Activated naive CD4-positive, alpha-beta T cell treated with anti-CD3 and anti-CD28 coated beads for 36 hours (primary cell): ENCODE measurements at regions of chr5 and their contacts with region 1.

Region 1: DNA sequence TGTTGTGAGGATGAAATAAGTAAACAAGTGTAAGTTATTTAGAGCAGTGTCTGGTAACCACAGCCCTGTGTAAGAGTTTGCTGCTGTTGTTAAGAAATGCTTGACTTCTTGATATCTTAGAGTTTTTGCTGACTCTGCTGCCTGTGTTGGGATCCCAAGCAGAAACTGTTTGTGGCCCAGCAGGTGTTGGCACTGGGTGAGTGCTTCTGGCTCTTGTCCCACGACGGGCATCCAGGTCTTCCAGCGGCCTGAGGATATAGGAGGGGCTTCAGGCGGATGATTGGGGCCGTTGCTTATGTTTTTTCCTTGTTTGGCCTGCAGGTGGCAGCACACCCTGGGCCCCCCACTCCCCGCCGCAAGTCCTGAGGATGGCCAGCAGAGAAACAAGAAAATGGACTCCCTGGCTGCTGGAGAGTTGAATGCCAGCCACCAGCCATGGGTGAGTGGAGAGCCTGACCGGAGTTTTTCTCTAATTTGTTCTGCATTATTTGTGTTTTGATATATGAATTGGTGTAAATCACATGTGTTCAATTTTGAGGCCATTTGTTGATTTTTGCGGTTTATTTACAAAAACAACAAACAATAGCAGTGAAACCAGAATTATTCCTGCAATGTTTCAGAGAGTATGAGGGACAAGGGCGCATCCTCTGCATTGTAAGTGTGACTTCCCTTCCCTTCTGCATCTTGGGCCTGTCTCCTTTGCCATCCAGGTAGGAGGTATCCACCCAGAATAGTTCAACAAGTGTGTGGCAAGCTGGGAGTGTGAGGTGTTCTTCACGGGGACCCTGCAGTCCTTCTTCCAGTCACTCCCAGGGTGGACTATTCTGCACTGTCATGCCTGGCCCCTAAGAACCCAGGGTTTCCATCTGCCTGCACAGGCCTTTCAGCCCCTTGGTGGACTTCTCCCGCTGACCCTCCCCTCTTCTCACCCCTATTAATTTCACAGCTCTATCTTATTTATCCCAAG is 50.3 kb downstream of the SLC22A5 start:
- DNase-seq: peak; percentile 67
- H3K4me3 Mint-ChIP-seq: peak overlapping the region; percentile 14
- H3K27ac Mint-ChIP-seq: peak overlapping the region; percentile 86
- H3K4me1 Mint-ChIP-seq: peaks cover 87% of the 10 kb centered on the region
- H3K27me3 Mint-ChIP-seq: no peaks in the 10 kb centered on the region

Region 2: DNA sequence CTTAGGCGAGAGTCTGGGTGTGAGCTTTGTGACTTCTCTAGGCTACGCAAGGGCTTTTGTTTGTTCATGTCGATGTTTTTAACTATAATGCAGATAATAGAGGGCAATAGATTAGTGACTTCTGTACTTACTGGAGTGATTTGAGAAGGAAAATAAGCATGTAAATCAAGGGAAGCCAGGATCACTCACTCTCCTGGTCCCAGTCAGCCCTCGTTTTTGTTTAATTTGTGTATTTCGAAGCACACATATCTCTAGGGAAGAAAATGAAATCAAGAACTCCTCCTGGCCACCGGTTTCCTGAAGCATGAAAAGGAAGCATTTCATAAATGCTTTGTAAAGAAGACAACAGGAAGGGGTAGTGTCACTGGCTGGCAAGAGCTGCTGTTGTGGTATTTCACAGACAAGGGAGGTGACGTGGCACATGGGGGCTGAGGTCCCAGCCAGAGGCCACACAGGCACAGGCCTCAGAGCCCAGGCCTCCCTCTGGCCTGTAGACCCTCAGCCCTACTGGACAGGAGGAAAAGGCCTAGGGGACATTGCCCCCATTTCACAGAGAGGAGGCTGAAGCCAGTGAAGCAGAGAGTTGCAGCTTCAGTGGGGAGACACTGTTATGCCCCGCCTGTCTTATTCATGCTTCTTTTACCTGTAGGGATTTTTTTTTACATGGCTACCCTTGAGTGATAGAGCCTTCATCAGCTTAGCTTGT is 36.7 kb after region 1 on chr5:
- CTCF ChIA-PET with region 1: interaction called, 16 read pairs
- intact Hi-C with region 1: loop called (anchors 1 kb)
- DNase-seq: peak; percentile 66
- H3K4me3 Mint-ChIP-seq: peak overlapping the region; percentile 0
- H3K27ac Mint-ChIP-seq: peak overlapping the region; percentile 83
- H3K4me1 Mint-ChIP-seq: peaks cover 84% of the 10 kb centered on the region
- H3K27me3 Mint-ChIP-seq: no peaks in the 10 kb centered on the region

Region 3: GRCh38 chr5:132473019-132473531 is 53.3 kb after region 1 on chr5:
- CTCF ChIA-PET with region 1: interaction called, 19 read pairs
- intact Hi-C with region 1: no loop called
- DNase-seq: peak; percentile 86
- H3K4me3 Mint-ChIP-seq: peak overlapping the region; percentile 16
- H3K27ac Mint-ChIP-seq: peak overlapping the region; percentile 80
- H3K4me1 Mint-ChIP-seq: peaks cover 67% of the 10 kb centered on the region
- H3K27me3 Mint-ChIP-seq: no peaks in the 10 kb centered on the region

Region 4: GRCh38 chr5:132479111-132479951 is 59.5 kb after region 1 on chr5:
- CTCF ChIA-PET with region 1: interaction called, 19 read pairs
- intact Hi-C with region 1: no loop called
- DNase-seq: no peak
- H3K4me3 Mint-ChIP-seq: no peak overlapping the region
- H3K27ac Mint-ChIP-seq: peak overlapping the region; percentile 36
- H3K4me1 Mint-ChIP-seq: peaks cover 53% of the 10 kb centered on the region
- H3K27me3 Mint-ChIP-seq: no peaks in the 10 kb centered on the region

Region 5: GRCh38 chr5:132490486-132491367 is 70.9 kb after region 1 on chr5 and contains the start of gene IRF1:
- CTCF ChIA-PET with region 1: interaction called, 76 read pairs
- intact Hi-C with region 1: loop called (anchors 1 kb)
- DNase-seq: peak; percentile 98
- H3K4me3 Mint-ChIP-seq: peak within 1 kb of the TSS; percentile 91
- H3K27ac Mint-ChIP-seq: peak within 1 kb of the TSS; percentile 97
- H3K4me1 Mint-ChIP-seq: peaks cover 64% of the 10 kb centered on the region
- H3K27me3 Mint-ChIP-seq: no peaks in the 10 kb centered on the region
- total RNA-seq, gene IRF1: 84.3 to 88.4 TPM

Region 6: DNA sequence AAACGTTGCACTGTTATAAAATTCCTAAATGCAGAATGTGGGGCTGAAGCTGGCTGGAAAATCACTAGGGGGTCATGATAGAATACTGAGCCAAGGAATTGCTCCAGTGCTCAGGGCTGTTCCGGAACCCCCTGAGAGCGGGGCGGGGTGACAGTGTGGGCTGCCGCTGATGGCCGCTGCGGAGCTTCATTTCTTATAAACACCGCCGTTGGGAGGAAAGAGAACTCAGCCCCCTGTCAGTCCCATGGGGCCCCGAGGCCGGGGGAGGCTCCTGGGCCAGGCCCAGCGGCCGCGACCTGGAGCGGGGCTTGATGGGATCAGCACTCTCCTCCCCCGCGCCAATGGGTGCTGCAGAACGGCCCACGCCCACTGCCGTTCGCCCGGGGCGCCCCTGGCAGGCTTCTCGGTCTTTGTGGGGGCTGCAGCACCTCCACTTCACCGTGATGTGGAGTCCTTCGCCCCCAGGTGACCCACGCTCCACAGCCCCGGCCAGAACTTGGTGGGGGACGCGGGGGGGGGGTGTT is 75.9 kb after region 1 on chr5:
- CTCF ChIA-PET with region 1: interaction called, 76 read pairs
- intact Hi-C with region 1: no loop called
- DNase-seq: peak; percentile 79
- H3K4me3 Mint-ChIP-seq: peak overlapping the region; percentile 84
- H3K27ac Mint-ChIP-seq: peak overlapping the region; percentile 91
- H3K4me1 Mint-ChIP-seq: peaks cover 56% of the 10 kb centered on the region
- H3K27me3 Mint-ChIP-seq: no peaks in the 10 kb centered on the region

Region 7: GRCh38 chr5:132500931-132501630 is 81.3 kb after region 1 on chr5:
- CTCF ChIA-PET with region 1: interaction called, 76 read pairs
- intact Hi-C with region 1: loop called (anchors 1 kb)
- DNase-seq: peak; percentile 86
- H3K4me3 Mint-ChIP-seq: no peak overlapping the region
- H3K27ac Mint-ChIP-seq: no peak overlapping the region
- H3K4me1 Mint-ChIP-seq: peaks cover 19% of the 10 kb centered on the region
- H3K27me3 Mint-ChIP-seq: no peaks in the 10 kb centered on the region